Activated CD4-positive, alpha-beta memory T cell treated with anti-CD3 and anti-CD28 coated beads, Interleukin-2, amount 10 ng/mL, durations not matched to agents 7 days and 5 days (primary cell): ENCODE measurements at regions of chr17 and their contacts with region 1.

Region 1: DNA sequence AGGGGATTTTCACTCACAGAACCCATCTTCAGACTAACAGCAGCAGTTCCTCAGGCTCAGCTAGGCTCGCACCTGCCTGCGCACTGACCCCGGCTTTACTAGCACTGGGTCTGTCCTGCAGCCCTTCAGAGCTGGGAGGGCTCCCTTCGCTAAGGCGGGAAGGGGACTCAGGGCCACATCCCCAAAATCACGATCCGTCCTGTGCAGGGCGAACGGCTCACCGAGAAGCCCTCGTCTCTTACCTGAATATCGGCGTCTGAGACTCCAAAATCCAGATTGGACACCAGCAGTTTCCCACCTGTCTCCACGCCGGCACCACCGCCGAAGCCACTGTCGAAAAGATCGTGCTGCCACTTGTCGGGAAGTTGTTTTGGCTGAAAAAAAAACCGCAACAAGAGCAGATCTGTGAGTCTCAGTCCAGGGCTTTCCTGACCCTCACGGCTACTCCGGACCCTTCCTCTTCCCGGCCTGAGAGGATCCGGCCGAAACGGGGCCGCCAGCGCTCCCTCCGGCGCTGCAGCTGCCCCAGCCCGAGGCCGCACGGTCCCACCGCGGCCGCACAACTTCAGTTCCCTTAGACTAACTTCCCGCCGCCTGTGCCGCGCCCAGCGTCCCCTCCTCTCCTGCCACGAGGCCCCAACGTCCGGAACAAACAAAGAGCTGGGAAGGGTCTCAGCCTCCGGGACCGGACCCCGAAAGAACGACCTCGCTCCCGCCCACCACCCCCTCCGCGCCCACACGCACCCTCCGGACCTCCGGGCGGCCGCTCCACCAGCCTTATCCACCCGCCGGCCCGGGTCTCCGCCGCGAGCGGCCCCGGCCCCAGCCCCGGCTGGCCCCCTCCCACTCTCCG is 713 bp downstream of the ALYREF start:
- DNase-seq: peak; percentile 46
- H3K4me3 Mint-ChIP-seq: peak overlapping the region; percentile 87
- H3K27ac Mint-ChIP-seq: peak overlapping the region; percentile 94
- H3K4me1 Mint-ChIP-seq: peaks cover 43% of the 10 kb centered on the region
- H3K27me3 Mint-ChIP-seq: no peaks in the 10 kb centered on the region

Region 2: GRCh38 chr17:81794509-81794908 is 96.2 kb before region 1 on chr17:
- CTCF ChIA-PET with region 1: no interaction called
- POLR2A ChIA-PET with region 1: no interaction called
- DNase-seq: no peak
- H3K4me3 Mint-ChIP-seq: no peak overlapping the region
- H3K27ac Mint-ChIP-seq: no peak overlapping the region
- H3K4me1 Mint-ChIP-seq: no peaks in the 10 kb centered on the region
- H3K27me3 Mint-ChIP-seq: peaks cover 1% of the 10 kb centered on the region

Region 3: GRCh38 chr17:81902023-81902652 is 11.5 kb after region 1 on chr17 and contains the start of gene NPB:
- CTCF ChIA-PET with region 1: no interaction called
- POLR2A ChIA-PET with region 1: interaction called, 10 read pairs
- DNase-seq: no peak
- H3K4me3 Mint-ChIP-seq: peak within 1 kb of the TSS; percentile 10
- H3K27ac Mint-ChIP-seq: peak within 1 kb of the TSS; percentile 26
- H3K4me1 Mint-ChIP-seq: peaks cover 6% of the 10 kb centered on the region
- H3K27me3 Mint-ChIP-seq: peaks cover 9% of the 10 kb centered on the region
- total RNA-seq, gene NPB: 0.38 TPM in 1 of 2 experiments, not detected in the other

Region 4: DNA sequence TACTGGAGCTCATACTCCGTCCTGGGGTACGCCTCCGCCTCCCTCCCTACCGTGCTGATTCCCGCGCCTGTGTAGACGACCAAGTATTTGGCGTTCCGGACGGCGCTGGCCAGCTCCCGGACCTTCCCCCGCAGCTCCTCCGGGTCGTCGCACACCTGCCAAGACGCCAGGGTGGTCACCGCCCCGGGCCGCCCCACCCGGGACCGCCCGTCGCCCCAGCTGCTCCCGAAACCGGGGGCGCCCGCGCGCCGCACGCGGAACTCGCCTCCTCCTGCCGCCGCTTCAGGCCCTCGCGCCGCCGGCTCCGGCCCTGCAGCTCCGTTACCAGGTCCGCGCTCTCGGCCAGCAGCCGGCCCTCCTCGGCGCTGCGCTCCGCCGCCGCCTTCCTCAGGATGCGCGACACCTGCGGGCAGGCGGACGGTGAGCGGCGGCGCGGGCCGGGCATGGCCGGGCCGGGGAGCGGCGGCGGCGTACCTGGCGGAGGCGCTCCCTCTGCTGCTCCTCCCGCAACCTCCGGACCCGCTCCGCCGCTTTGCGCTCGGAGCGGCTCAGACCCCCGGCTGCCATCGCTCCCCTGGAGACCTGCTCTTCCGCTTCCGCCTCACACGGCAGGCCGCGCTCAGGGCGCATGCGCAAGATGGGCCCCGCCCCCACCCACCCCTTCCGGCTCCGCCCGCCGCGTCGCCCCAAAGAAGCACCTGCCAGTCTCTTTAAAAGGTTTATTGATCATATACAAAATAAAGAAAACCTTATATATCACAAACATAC is 27.1 kb after region 1 on chr17 and contains the start of gene SIRT7:
- CTCF ChIA-PET with region 1: interaction called, 3 read pairs
- POLR2A ChIA-PET with region 1: interaction called, 11 read pairs
- DNase-seq: peak; percentile 86
- H3K4me3 Mint-ChIP-seq: peak within 1 kb of the TSS; percentile 89
- H3K27ac Mint-ChIP-seq: peak within 1 kb of the TSS; percentile 82
- H3K4me1 Mint-ChIP-seq: peaks cover 48% of the 10 kb centered on the region
- H3K27me3 Mint-ChIP-seq: no peaks in the 10 kb centered on the region
- total RNA-seq, gene SIRT7: 55.8 to 58.4 TPM

Region 5: DNA sequence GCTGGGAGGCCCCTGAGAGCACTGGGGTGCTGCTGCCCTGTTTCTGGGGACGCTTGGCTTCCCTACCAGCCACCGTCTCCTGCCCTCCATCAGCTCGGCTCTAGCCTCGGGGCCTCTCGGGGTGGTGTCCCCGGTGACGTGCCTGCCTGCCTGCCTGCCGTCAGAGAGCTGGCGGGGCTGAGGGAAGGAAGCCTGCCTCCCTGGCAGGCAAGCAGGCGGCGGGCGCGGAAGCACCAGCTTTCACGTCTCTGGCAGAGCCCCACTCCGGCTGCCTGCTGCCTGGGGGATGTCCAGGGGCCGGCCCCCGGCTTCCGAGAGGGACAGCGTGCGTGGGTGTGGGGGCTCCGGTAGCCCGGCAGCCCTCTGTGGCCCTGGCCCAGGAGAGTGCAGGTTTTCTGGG is 122.7 kb after region 1 on chr17:
- CTCF ChIA-PET with region 1: no interaction called
- POLR2A ChIA-PET with region 1: no interaction called
- DNase-seq: no peak
- H3K4me3 Mint-ChIP-seq: no peak overlapping the region
- H3K27ac Mint-ChIP-seq: no peak overlapping the region
- H3K4me1 Mint-ChIP-seq: peaks cover under 1% of the 10 kb centered on the region
- H3K27me3 Mint-ChIP-seq: no peaks in the 10 kb centered on the region